ENCODE measurements at regions of chr6 and their contacts with region 1.

Region 1: DNA sequence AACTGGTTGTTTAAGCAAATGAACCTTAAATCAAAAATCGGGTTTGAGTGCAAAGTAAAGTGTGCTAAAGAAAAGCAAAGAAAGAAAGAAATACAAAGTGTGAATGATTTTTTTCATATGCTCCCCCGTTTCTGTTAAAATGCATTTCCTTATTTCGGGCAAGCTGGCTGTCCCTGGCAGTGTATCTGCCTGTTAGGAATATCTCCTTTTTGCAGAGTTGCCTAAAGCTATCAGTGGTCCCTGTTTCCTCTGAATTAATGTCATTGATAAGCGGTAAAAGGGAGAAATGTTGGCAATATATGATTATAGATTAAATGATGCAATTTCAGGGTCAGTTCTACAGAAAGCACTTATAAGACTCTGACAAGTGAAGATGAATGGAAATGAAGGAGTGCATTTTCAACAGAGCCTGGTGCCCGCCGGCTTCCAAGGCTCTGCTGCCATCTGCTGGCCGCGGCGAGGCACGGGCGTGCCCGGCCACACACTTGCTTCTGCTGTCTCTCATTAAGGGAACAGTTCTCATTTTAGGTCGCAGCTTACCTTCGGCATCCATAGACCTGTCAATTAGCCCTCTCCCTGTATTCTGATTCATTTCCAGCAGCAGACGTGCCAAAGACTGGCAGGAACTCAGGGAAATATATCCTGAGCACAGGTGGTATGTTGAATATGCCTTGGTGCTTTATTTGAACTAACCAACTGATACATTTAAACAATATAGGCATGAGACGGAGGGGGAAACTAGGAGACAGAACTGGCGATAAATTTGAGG is 381.9 kb downstream of the C6orf118 start:
- DNase-seq: peak; percentile 1
- H3K4me3 ChIP-seq: peak overlapping the region; percentile 34; the same call in 1 of the 2 replicates
- CTCF ChIP-seq: peak; percentile 94

Region 2: DNA sequence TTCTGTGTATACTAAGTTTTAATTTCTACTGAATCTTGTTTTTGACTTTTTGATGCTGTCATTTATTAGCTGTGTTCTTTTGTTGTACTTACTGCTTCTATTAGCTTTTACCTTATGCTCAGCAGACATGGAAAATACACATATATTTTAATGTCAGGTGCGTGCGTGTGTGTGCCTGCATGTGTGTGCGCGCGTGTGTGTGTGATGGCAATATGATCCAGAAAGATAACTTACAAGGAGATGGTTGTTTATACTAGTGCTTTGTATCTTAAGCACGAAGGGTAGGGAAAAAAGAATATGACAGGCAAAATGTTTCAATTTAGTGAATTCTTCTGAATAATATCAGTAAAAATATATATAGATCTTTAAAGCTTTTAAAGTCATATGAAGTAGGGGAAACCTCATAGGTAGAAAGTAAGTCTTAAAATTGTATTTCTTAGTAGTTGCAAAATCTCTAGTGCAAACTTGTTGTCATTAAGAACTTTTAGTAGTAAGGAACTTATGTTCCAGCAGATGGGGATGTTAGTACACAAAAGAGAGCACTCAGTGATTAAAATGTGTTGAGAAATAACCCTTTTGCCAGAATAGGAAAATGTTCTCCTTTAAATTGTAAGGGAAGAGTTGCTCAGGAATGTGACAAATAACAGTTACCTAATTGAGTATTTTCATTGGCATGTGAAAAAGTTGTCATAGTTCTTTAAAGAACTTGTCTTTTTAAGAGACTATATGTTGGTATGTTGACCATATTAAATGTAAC is 1499.8 kb before region 1 on chr6:
- CTCF ChIA-PET with region 1: interaction called, 20 read pairs
- POLR2A ChIA-PET with region 1: no interaction called
- DNase-seq: peak; percentile 62
- H3K4me3 ChIP-seq: no peak overlapping the region
- CTCF ChIP-seq: peak; percentile 5

Region 3: GRCh38 chr6:164942271-164942765 is 14.8 kb after region 1 on chr6:
- CTCF ChIA-PET with region 1: interaction called, 11 read pairs
- POLR2A ChIA-PET with region 1: no interaction called
- DNase-seq: no peak
- H3K4me3 ChIP-seq: no peak overlapping the region
- CTCF ChIP-seq: no peak

Region 4: GRCh38 chr6:165010556-165011535 is 83.4 kb after region 1 on chr6:
- CTCF ChIA-PET with region 1: no interaction called
- POLR2A ChIA-PET with region 1: no interaction called
- DNase-seq: no peak
- H3K4me3 ChIP-seq: no peak overlapping the region
- CTCF ChIP-seq: no peak

Region 5: GRCh38 chr6:165231581-165232561 is 304.4 kb after region 1 on chr6:
- CTCF ChIA-PET with region 1: interaction called, 13 read pairs
- POLR2A ChIA-PET with region 1: no interaction called
- DNase-seq: no peak
- H3K4me3 ChIP-seq: no peak overlapping the region
- CTCF ChIP-seq: peak; percentile 32

Region 6: GRCh38 chr6:165245287-165245686 is 317.8 kb after region 1 on chr6:
- CTCF ChIA-PET with region 1: interaction called, 12 read pairs
- POLR2A ChIA-PET with region 1: no interaction called
- DNase-seq: no peak
- H3K4me3 ChIP-seq: no peak overlapping the region
- CTCF ChIP-seq: peak; percentile 6

Measured in AG04449 (cell line).